ENCODE measurements at regions of chr2 and their contacts with region 1.

Region 1: DNA sequence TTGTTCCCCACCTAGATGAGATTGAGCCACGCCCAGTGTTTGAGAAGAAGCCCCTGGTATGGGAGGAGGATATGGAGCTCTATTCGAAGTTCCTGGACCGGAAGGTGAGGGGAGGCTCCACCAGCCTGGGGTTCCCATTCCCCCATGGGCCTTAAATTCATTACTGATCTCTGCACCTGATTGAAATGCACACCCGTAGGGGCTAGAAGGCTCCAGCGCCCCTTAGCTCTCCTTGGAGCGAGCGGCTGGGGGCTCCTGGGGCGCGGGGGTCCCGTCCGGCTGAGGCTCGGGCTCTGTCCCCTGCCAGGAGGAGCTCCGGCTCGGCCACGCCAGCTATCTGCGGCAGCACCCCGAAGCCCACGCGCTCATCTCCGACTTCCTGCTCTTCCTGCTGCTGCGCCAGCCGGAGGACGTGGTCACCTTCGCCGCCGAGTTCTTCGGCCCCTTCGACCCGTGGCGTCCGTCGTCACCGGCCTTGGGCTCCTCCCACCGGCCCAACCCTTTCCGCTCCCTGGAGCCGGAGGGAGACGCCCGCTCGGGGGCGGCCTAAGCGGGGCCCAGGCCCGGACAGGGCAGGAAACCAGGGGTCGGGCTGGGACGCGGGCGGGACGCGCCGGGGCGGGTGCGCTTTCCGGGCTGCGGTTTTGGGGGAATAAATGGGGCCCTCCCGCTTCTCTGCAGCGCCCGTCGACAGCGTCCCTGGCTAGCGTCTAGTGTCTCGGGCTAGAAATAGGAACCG is 10.9 kb downstream of the CATIP start:
- DNase-seq: peak; percentile 63
- H3K4me3 Mint-ChIP-seq: peak overlapping the region; percentile 74
- H3K27ac Mint-ChIP-seq: peak overlapping the region; percentile 74
- H3K4me1 Mint-ChIP-seq: peaks cover 12% of the 10 kb centered on the region
- H3K27me3 Mint-ChIP-seq: peaks cover 14% of the 10 kb centered on the region

Region 2: DNA sequence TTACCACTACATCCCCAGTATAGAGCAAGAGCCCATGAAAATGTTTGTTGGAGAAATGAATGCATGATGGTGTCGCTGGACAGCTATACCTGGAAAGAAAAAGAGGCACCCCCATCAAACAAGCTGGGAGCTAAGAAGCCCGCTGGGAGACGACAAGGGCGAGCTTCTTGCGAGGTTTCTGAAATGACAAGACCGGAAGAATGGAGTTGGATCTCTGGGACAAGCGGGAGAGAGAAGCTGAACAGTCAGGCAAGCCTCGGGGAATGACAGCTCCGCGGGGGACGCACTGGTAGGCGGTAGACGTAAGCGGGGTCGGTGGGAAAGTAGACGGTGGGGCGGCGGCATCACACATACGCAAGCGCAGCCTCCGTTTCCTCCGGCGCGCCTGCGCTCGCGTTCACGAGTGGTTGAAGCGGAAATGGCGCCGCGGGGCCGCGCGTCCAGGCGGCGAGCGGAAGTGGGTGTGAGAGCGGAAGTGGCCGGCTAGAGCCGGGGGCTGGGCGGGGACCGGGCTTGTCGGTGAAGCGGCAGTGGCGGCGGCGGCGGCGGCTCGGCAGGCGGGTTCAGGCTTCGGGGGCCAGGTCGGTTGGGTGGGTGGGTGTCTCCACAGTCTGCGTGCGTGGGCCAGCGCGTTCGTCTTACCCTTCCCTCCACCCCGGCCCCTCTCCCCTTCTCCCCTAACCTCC is 150.8 kb before region 1 on chr2 and contains the start of gene ARPC2:
- intact Hi-C with region 1: no loop called
- DNase-seq: peak; percentile 95
- H3K4me3 Mint-ChIP-seq: peak within 1 kb of the TSS; percentile 89
- H3K27ac Mint-ChIP-seq: peak within 1 kb of the TSS; percentile 95
- H3K4me1 Mint-ChIP-seq: peaks cover 35% of the 10 kb centered on the region
- H3K27me3 Mint-ChIP-seq: peaks cover 2% of the 10 kb centered on the region
- total RNA-seq, gene ARPC2: 639 and 643 TPM in 2 replicates

Region 3: GRCh38 chr2:218292048-218293014 is 75.3 kb before region 1 on chr2 and contains the start of gene TMBIM1:
- intact Hi-C with region 1: loop called (anchors 5 kb)
- DNase-seq: peak; percentile 76
- H3K4me3 Mint-ChIP-seq: peak within 1 kb of the TSS; percentile 87
- H3K27ac Mint-ChIP-seq: peak within 1 kb of the TSS; percentile 93
- H3K4me1 Mint-ChIP-seq: peaks cover 50% of the 10 kb centered on the region
- H3K27me3 Mint-ChIP-seq: no peaks in the 10 kb centered on the region
- total RNA-seq, gene TMBIM1: 69.6 and 73.7 TPM in 2 replicates

Region 4: DNA sequence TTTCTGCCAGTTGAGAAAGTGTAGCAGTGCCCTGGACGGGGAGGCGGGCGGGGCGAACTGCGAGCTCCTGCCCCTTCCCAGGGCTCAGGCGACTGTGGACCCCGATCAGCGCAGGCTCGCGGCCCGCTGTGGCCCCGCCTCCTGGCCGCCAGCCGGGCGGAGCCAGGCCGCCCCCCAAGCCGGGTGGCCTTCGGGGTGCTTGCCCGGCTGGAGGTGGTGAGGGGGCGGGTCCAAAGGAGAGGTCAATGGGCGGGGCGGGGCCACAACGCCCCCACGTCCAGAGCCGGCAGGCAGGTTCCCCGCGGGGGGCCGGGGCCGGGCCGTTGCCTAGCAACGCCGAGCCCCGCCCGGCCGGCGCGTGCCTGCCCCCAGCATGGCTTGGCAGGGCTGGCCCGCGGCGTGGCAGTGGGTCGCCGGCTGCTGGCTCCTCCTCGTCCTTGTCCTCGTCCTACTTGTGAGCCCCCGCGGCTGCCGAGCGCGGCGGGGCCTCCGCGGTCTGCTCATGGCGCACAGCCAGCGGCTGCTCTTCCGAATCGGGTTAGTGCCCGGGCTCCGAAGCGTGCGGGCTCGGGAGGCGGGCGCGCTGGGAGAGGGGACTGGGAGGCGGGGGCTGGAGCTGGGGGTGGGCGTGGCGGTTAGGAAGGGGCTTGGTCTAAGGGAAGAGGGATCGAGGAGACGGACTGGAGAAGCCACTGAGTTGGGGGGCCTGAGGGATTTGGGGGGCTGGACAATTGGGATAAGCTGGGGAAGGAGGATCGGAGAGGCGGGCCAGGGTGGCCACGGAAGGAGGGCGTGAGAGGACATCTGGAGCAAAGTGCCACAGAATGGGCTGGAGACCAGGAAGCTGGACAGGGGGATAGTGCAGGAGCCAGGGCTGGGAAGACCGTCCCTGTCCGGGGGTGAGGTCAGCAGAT is 44.4 kb before region 1 on chr2:
- intact Hi-C with region 1: loop called (anchors 5 kb)
- DNase-seq: peak; percentile 19
- H3K4me3 Mint-ChIP-seq: peak overlapping the region; percentile 82
- H3K27ac Mint-ChIP-seq: no peak overlapping the region
- H3K4me1 Mint-ChIP-seq: peaks cover 11% of the 10 kb centered on the region
- H3K27me3 Mint-ChIP-seq: peaks cover 28% of the 10 kb centered on the region